WTC11 (cell line): ENCODE measurements at regions of chr20 and their contacts with region 1.

Region 1: GRCh38 chr20:52047811-52048764 is 143.5 kb downstream of the ZFP64 start:
- DNase-seq: peak; percentile 38
- ATAC-seq: peak; percentile 27
- H3K4me3 Mint-ChIP-seq: peak overlapping the region; percentile 59
- H3K27ac Mint-ChIP-seq: peak overlapping the region; percentile 99
- H3K4me1 Mint-ChIP-seq: peaks cover 45% of the 10 kb centered on the region
- H3K27me3 Mint-ChIP-seq: no peaks in the 10 kb centered on the region
- CTCF ChIP-seq: no peak

Region 2: GRCh38 chr20:52031563-52032303 is 16.4 kb before region 1 on chr20:
- CTCF ChIA-PET with region 1: no interaction called
- POLR2A ChIA-PET with region 1: no interaction called
- DNase-seq: no peak
- ATAC-seq: no peak
- H3K4me3 Mint-ChIP-seq: no peak overlapping the region
- H3K27ac Mint-ChIP-seq: peak overlapping the region; percentile 81
- H3K4me1 Mint-ChIP-seq: peaks cover 19% of the 10 kb centered on the region
- H3K27me3 Mint-ChIP-seq: no peaks in the 10 kb centered on the region
- CTCF ChIP-seq: no peak

Region 3: DNA sequence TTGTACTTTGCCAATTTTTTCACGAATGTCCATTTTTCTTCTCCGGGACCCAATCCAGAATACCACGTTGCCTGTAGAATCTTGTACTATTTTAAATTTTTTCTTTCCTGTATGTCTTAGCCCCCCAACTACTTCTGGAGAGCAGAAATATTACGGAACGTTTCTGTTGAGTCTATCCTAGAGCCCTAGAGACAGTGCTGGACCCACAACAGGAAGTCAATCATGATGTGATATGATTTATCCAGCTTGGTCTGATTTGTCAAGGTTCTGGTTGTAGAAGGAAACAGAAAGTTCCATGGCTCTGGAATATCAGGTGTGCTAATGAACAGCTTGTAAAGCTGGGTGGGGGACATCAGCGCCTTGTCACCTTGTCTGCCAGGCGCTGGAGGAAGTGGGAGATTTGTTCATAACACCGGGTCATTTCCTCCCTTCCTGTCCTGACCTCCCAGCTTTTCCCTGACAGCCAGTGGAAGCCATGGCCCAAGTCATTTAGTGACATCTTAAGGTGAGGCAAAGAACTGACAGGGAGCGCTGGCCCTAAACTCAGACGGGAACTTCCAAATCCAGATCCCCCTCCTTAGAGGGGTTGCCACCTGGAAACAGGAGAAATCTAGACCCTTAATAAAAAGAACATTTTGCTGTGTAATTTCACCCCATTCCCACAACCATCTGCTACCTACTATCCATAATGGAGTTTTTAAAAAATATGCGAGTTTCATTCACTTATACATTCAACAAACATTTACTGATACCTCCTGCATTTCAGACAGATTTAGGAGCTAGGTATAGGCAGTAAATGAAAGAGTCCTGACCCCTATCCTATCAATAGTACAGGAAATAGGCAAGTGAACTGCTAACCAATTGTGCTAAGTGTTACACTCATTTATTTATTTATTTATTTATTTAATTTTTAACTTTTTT is 13.0 kb after region 1 on chr20:
- CTCF ChIA-PET with region 1: interaction called, 25 read pairs
- POLR2A ChIA-PET with region 1: no interaction called
- DNase-seq: peak; percentile 45
- ATAC-seq: peak; percentile 97
- H3K4me3 Mint-ChIP-seq: no peak overlapping the region
- H3K27ac Mint-ChIP-seq: peak overlapping the region; percentile 58
- H3K4me1 Mint-ChIP-seq: peaks cover 10% of the 10 kb centered on the region
- H3K27me3 Mint-ChIP-seq: no peaks in the 10 kb centered on the region; the same call in 1 of the 2 replicates
- CTCF ChIP-seq: no peak